B cell (primary cell): ENCODE measurements at regions of chr10 and their contacts with region 1.

Region 1: DNA sequence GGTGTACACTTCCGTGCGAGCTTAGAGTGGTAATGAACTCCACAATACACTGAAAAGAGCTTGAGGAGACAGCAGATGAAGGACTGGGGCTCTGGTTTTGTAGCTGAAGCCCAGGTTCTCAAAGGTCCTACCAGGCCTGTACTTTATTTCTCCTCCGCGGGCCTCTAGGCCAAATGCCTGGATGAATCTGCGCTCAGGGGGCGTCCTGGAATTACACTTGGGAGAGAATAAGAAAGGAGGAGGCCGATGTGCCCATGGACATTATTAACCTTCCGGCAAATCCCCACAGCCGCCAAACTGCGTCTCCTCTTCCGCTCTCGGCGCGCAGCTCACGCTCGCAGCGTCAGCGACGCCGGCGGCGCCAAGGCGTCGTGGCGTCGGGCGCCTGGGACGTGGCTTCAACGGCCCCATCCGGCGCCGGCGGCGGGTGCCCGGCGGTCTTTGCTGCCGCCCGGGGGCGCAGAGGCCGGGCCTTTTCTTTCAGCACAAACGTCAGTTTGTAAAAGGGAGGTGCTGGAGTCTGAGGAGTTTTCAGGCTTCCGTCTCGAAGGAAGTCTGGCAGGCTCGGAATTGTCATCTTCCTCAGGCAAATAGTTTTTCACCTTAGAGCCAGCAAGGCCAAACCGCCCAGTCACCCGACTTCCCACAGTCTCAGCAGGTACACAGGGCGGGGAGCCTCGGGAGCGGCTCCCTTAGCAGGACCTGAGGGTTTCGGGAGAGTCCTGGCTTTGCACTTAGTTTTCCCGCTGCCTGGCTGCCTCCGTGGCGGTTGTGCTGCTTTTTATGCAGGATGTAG is at the start of gene CCDC7:
- DNase-seq: peak; percentile 93
- ATAC-seq: peak; percentile 99
- H3K4me3 ChIP-seq: peak within 1 kb of the TSS; percentile 93 to 99 (median 98)
- H3K4me3 Mint-ChIP-seq: peak within 1 kb of the TSS; percentile 98
- H3K27ac ChIP-seq: peak within 1 kb of the TSS; percentile 95 to 99
- H3K27ac Mint-ChIP-seq: peak within 1 kb of the TSS; percentile 100
- H3K4me1 ChIP-seq: peaks cover 7 to 8% of the 10 kb centered on the region in 2 donors
- H3K4me1 Mint-ChIP-seq: peaks cover 13% of the 10 kb centered on the region
- H3K27me3 ChIP-seq: peaks cover 0 to 4% (median 0%) of the 10 kb centered on the region in 4 experiments
- H3K27me3 Mint-ChIP-seq: peaks cover 16% of the 10 kb centered on the region
- CTCF ChIP-seq: peak; percentile 65
- total RNA-seq, gene CCDC7: 23.5 and 26.6 TPM in 2 replicates

Region 2: GRCh38 chr10:31864834-31865518 is 581.0 kb before region 1 on chr10:
- CTCF ChIA-PET with region 1: no interaction called
- POLR2A ChIA-PET with region 1: no interaction called
- intact Hi-C with region 1: no loop called
- DNase-seq: no peak
- ATAC-seq: no peak
- H3K4me3 ChIP-seq: no peak overlapping the region
- H3K4me3 Mint-ChIP-seq: no peak overlapping the region
- H3K27ac ChIP-seq: no peak overlapping the region
- H3K27ac Mint-ChIP-seq: no peak overlapping the region
- H3K4me1 ChIP-seq: peaks cover 3 to 5% of the 10 kb centered on the region in 2 donors
- H3K4me1 Mint-ChIP-seq: peaks cover 24% of the 10 kb centered on the region
- H3K27me3 ChIP-seq: no peaks in the 10 kb centered on the region
- H3K27me3 Mint-ChIP-seq: no peaks in the 10 kb centered on the region
- CTCF ChIP-seq: no peak

Region 3: DNA sequence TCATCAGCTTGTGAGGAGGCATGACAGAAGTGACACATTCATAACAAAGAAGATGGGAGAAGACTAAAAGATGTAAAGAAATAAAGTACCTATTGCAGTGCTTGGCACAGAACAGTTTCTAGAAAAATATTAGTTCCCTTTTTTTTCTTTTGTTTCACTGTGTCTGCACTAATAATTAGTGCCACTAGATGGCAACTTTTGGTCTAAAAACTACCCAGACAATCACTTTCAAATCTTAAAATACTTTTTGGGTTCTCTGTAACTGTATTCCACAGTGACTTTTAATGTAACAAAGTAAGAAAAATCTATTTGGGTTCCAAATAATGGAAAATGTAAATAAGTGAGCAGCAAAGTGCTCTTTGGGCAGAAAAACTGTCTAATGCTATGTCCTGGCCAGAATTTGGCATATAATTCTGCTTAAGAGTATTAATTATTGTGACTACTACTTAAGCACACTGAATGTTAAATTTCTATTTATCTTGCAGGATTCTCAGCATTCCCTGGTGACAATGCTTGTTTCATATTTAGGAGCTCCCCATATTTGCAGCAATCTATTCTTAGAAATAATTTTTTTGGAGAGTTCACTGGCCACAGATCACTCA is 254.9 kb before region 1 on chr10:
- CTCF ChIA-PET with region 1: no interaction called
- POLR2A ChIA-PET with region 1: no interaction called
- intact Hi-C with region 1: loop called (anchors 5 kb)
- DNase-seq: peak; percentile 70
- ATAC-seq: peak; percentile 82
- H3K4me3 ChIP-seq: no peak overlapping the region
- H3K4me3 Mint-ChIP-seq: no peak overlapping the region
- H3K27ac ChIP-seq: no peak overlapping the region
- H3K27ac Mint-ChIP-seq: peak overlapping the region; percentile 79
- H3K4me1 ChIP-seq: peaks cover 0 to 4% of the 10 kb centered on the region in 2 donors
- H3K4me1 Mint-ChIP-seq: peaks cover 5% of the 10 kb centered on the region
- H3K27me3 ChIP-seq: peaks cover 0 to 4% (median 0%) of the 10 kb centered on the region in 4 experiments
- H3K27me3 Mint-ChIP-seq: peaks cover 7% of the 10 kb centered on the region
- CTCF ChIP-seq: peak; percentile 86

Region 4: GRCh38 chr10:32256613-32257437 is 189.1 kb before region 1 on chr10:
- CTCF ChIA-PET with region 1: interaction called, 4 read pairs
- POLR2A ChIA-PET with region 1: no interaction called
- intact Hi-C with region 1: loop called (anchors 2 kb)
- DNase-seq: peak; percentile 81
- ATAC-seq: peak; percentile 92
- H3K4me3 ChIP-seq: no peak overlapping the region
- H3K4me3 Mint-ChIP-seq: peak overlapping the region; percentile 16
- H3K27ac ChIP-seq: no peak overlapping the region
- H3K27ac Mint-ChIP-seq: no peak overlapping the region
- H3K4me1 ChIP-seq: peaks cover 3 to 7% of the 10 kb centered on the region in 2 donors
- H3K4me1 Mint-ChIP-seq: peaks cover 6% of the 10 kb centered on the region
- H3K27me3 ChIP-seq: no peaks in the 10 kb centered on the region
- H3K27me3 Mint-ChIP-seq: no peaks in the 10 kb centered on the region
- CTCF ChIP-seq: peak; percentile 93

Region 5: DNA sequence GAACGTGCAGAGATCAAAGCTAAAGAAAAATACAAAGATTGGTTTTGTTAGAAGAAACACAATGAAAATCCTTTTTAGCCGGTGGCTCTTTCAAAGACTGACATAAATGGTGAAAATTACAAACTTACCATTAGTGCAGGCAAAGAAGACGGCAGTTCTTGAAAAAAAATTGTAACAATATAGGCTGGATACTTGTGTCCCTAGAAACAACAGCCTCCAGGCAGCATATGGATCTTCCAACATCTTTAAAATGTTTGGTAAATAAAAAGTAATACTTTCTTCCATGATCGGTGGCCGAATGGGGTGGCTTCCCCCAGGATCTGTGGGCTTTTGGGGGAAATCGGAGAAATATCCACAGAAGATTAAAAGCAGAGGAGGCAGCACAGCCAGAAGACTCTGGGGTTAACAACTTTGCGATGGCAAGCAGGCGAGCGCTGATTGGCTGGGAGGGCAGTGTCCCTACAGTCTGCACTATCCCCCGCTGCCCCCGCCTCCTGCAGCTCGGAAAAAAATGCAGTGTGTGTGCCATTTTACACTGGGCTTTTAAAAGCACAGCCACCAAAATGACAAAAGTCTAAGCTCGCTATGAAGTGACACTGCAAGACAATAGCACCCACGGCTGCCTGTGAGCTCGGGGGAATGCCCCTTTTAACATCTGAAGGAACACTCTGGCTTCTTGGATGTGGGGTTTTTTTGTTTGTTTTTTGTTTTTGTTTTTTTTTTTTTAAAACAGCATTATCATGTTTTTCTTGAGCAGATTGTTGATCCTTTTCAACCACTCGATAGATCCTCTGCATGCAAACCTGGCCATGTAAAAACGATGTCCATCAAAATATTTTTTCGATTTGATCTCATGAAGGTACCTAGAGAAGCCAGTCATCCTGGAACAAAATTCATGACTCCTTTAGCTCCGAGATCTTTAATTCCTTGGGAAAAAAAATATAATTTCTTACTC is 67.3 kb before region 1 on chr10:
- CTCF ChIA-PET with region 1: interaction called, 7 read pairs
- POLR2A ChIA-PET with region 1: interaction called, 17 read pairs
- intact Hi-C with region 1: loop called (anchors 1 kb)
- DNase-seq: peak; percentile 90
- ATAC-seq: peak; percentile 95
- H3K4me3 ChIP-seq: peak overlapping the region; percentile 63 to 99 (median 83)
- H3K4me3 Mint-ChIP-seq: no peak overlapping the region
- H3K27ac ChIP-seq: peak overlapping the region; percentile 73 to 85
- H3K27ac Mint-ChIP-seq: no peak overlapping the region
- H3K4me1 ChIP-seq: peaks cover 10 to 23% of the 10 kb centered on the region in 2 donors
- H3K4me1 Mint-ChIP-seq: peaks cover 20% of the 10 kb centered on the region
- H3K27me3 ChIP-seq: no peaks in the 10 kb centered on the region
- H3K27me3 Mint-ChIP-seq: no peaks in the 10 kb centered on the region
- CTCF ChIP-seq: no peak

Region 6: DNA sequence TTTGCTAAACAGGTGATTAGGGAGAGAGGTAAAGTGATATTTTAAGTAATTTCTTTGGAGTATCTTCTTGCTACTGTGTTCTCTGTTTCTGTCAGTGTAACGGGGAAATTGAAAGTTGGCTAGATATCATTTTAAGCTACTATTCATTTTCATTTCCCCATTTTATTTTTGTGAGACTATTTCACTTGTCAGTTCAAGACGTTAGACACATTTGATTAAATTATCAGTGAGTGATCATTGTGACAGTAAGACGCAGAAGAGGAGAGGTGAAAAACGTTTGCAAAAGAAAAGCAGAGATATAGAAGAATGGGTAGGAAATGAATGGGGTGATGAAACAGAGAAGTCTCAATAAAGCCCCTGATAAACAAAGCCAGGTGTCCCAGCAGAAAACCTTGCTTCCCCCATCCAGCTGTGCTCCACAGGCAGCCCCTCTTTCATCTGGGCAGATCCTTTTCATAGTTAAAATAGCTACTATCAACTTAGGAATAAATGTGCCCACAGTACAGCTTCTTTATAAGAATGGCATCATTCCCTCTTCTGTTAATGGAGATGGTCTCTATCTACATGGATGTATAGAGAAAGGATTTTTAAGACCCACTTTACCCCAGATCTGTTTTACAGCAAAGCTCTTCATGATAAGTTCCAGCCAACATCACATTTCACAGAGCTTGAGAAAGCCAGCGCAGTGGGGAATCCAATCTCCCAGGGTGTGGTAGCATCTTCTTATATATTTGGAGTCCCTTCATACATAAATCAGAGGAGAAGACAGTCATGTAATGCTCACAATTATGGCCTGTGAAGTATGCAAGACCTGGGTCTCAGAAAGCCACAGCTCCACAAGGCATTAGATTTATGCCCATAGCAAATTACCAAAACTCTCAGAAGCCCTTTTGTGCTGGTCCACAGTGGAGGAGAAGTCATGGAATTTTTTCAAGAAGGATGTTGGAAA is 650.2 kb after region 1 on chr10:
- CTCF ChIA-PET with region 1: no interaction called
- POLR2A ChIA-PET with region 1: no interaction called
- intact Hi-C with region 1: loop called (anchors 5 kb)
- DNase-seq: peak; percentile 57
- ATAC-seq: peak; percentile 56
- H3K4me3 ChIP-seq: peak overlapping the region in 2 of 5 experiments; percentile 21 to 30
- H3K4me3 Mint-ChIP-seq: peak overlapping the region; percentile 70
- H3K27ac ChIP-seq: peak overlapping the region; percentile 59 to 65
- H3K27ac Mint-ChIP-seq: peak overlapping the region; percentile 81
- H3K4me1 ChIP-seq: peaks cover 44 to 54% of the 10 kb centered on the region in 2 donors
- H3K4me1 Mint-ChIP-seq: peaks cover 65% of the 10 kb centered on the region
- H3K27me3 ChIP-seq: no peaks in the 10 kb centered on the region
- H3K27me3 Mint-ChIP-seq: no peaks in the 10 kb centered on the region
- CTCF ChIP-seq: no peak